GM12878 (cell line): ENCODE measurements at regions of chr6 and their contacts with region 1.

Region 1: DNA sequence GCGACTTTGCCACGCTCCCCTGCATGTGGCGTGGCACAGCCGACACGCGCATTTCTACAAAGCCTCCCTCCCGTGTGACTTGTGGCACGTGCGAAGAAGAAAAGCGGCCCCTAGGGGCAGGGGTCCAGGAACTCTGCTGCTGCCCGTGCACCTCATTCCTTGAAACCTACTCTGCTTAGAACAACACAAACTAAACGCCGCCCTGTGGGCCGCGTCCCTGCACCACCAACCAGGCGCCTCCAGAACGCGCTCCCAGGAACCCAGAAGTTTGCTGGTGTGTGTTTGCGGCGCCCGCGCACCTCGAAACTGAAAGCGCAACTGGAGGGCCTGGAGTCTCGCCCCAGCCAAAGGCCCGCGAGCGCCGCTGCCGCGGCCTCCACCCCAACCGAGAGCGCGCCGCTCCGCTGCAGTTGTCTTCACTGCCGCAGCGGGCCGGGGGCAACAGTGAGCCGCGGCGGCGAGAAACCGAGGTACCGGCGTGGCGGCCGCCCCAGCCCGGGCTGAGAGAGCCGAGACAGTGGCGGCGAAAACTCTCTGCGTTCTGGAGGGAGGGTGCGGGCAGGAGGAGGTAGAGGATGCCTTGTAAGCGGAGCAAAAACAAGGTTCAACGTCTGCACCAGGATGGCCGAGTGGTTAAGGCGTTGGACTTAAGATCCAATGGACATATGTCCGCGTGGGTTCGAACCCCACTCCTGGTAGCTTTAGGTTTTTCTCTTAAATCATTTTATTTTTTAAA is 65.8 kb downstream of the STX11 start:
- DNase-seq: peak; percentile 96
- ATAC-seq: peak; percentile 95
- H3K4me3 ChIP-seq: peak overlapping the region; percentile 68
- H3K27ac ChIP-seq: peak overlapping the region; percentile 88
- H3K4me1 ChIP-seq: peaks cover 9% of the 10 kb centered on the region
- H3K27me3 ChIP-seq: no peaks in the 10 kb centered on the region
- CTCF ChIP-seq: peak; percentile 60 to 79 (median 69)
- EP300 ChIP-seq: peak in 1 of 2 experiments; percentile 91; a peak in 1 of 4 replicates
- POLR2A ChIP-seq: peak; percentile 79
- RAD21 ChIP-seq: peak; percentile 51

Region 2: GRCh38 chr6:143575440-143575839 is 640.7 kb before region 1 on chr6:
- CTCF ChIA-PET with region 1: interaction called, 5 read pairs
- POLR2A ChIA-PET with region 1: no interaction called
- RAD21 ChIA-PET with region 1: interaction called, 8 read pairs
- SMC1A ChIA-PET with region 1: interaction called, 5 read pairs
- in situ Hi-C with region 1: loop called (anchors 5 kb)
- intact Hi-C with region 1: loop called (anchors 5 kb)
- DNase-seq: peak; percentile 27
- ATAC-seq: peak; percentile 94
- H3K4me3 ChIP-seq: no peak overlapping the region
- H3K27ac ChIP-seq: no peak overlapping the region
- H3K4me1 ChIP-seq: no peaks in the 10 kb centered on the region
- H3K27me3 ChIP-seq: no peaks in the 10 kb centered on the region; a peak in 2 of 4 replicates
- CTCF ChIP-seq: peak; percentile 63 to 81 (median 79)
- EP300 ChIP-seq: no peak
- POLR2A ChIP-seq: no peak
- RAD21 ChIP-seq: peak; percentile 89

Region 3: GRCh38 chr6:144095331-144096002 is 120.6 kb before region 1 on chr6 and contains the start of gene SF3B5:
- CTCF ChIA-PET with region 1: interaction called, 24 read pairs
- POLR2A ChIA-PET with region 1: interaction called, 3 read pairs
- RAD21 ChIA-PET with region 1: interaction called, 27 read pairs
- SMC1A ChIA-PET with region 1: interaction called, 47 read pairs
- in situ Hi-C with region 1: loop called (anchors 5 kb)
- intact Hi-C with region 1: no loop called
- DNase-seq: peak; percentile 99
- ATAC-seq: peak; percentile 96
- H3K4me3 ChIP-seq: peak within 1 kb of the TSS; percentile 92
- H3K27ac ChIP-seq: peak within 1 kb of the TSS; percentile 81
- H3K4me1 ChIP-seq: peaks cover 15% of the 10 kb centered on the region
- H3K27me3 ChIP-seq: no peaks in the 10 kb centered on the region
- CTCF ChIP-seq: no peak
- EP300 ChIP-seq: no peak
- POLR2A ChIP-seq: peak; percentile 99
- RAD21 ChIP-seq: no peak
- polyA plus RNA-seq, gene SF3B5: 700 to 864 TPM

Region 4: GRCh38 chr6:144113366-144113765 is 102.7 kb before region 1 on chr6:
- CTCF ChIA-PET with region 1: interaction called, 142 read pairs
- POLR2A ChIA-PET with region 1: no interaction called
- RAD21 ChIA-PET with region 1: interaction called, 87 read pairs
- SMC1A ChIA-PET with region 1: interaction called, 125 read pairs
- in situ Hi-C with region 1: no loop called
- intact Hi-C with region 1: no loop called
- DNase-seq: no peak
- ATAC-seq: no peak
- H3K4me3 ChIP-seq: no peak overlapping the region
- H3K27ac ChIP-seq: no peak overlapping the region
- H3K4me1 ChIP-seq: no peaks in the 10 kb centered on the region
- H3K27me3 ChIP-seq: no peaks in the 10 kb centered on the region; a peak in 1 of 4 replicates
- CTCF ChIP-seq: no peak
- EP300 ChIP-seq: no peak
- POLR2A ChIP-seq: no peak
- RAD21 ChIP-seq: no peak

Region 5: DNA sequence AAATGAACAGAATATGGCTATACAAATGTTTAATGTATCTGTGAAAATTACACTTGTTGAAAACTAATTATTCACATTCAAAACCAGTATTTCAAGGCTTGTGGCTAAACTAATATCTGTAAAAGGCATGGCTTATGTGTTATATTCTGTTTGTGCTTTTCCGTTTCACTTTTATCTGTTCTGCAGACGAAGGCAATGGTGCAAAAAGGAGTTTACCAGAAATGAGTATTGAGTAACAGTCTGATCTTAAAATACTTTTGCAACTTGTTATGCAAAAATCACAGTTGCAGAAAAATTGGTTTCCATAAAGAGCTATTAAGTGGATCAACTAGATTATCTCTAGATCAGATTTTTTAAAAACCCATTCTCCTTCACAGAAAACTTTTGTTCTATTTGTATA is 75.2 kb before region 1 on chr6:
- CTCF ChIA-PET with region 1: interaction called, 6 read pairs
- POLR2A ChIA-PET with region 1: interaction called, 4 read pairs
- RAD21 ChIA-PET with region 1: interaction called, 21 read pairs
- SMC1A ChIA-PET with region 1: interaction called, 7 read pairs
- in situ Hi-C with region 1: no loop called
- intact Hi-C with region 1: no loop called
- DNase-seq: no peak
- ATAC-seq: peak; percentile 84
- H3K4me3 ChIP-seq: peak overlapping the region; percentile 37; the same call in 1 of the 2 replicates
- H3K27ac ChIP-seq: peak overlapping the region; percentile 71
- H3K4me1 ChIP-seq: peaks cover 18% of the 10 kb centered on the region
- H3K27me3 ChIP-seq: no peaks in the 10 kb centered on the region
- CTCF ChIP-seq: no peak
- EP300 ChIP-seq: no peak
- POLR2A ChIP-seq: no peak
- RAD21 ChIP-seq: no peak

Region 6: GRCh38 chr6:144155529-144155928 is 60.6 kb before region 1 on chr6:
- CTCF ChIA-PET with region 1: interaction called, 12 read pairs
- POLR2A ChIA-PET with region 1: interaction called, 3 read pairs
- RAD21 ChIA-PET with region 1: interaction called, 17 read pairs
- SMC1A ChIA-PET with region 1: interaction called, 21 read pairs
- in situ Hi-C with region 1: loop called (anchors 5 kb)
- intact Hi-C with region 1: loop called (anchors 1 kb)
- DNase-seq: no peak
- ATAC-seq: peak; percentile 63
- H3K4me3 ChIP-seq: peak overlapping the region; percentile 26
- H3K27ac ChIP-seq: peak overlapping the region; percentile 57
- H3K4me1 ChIP-seq: peaks cover 36% of the 10 kb centered on the region
- H3K27me3 ChIP-seq: no peaks in the 10 kb centered on the region
- CTCF ChIP-seq: no peak
- EP300 ChIP-seq: no peak
- POLR2A ChIP-seq: no peak
- RAD21 ChIP-seq: no peak

Region 7: GRCh38 chr6:144349690-144350527 is 133.8 kb after region 1 on chr6:
- CTCF ChIA-PET with region 1: interaction called, 5 read pairs
- POLR2A ChIA-PET with region 1: interaction called, 3 read pairs
- RAD21 ChIA-PET with region 1: interaction called, 5 read pairs
- SMC1A ChIA-PET with region 1: no interaction called
- in situ Hi-C with region 1: no loop called
- intact Hi-C with region 1: loop called (anchors 2 kb)
- DNase-seq: peak; percentile 60
- ATAC-seq: peak; percentile 44
- H3K4me3 ChIP-seq: peak overlapping the region; percentile 60
- H3K27ac ChIP-seq: peak overlapping the region; percentile 88
- H3K4me1 ChIP-seq: peaks cover 55% of the 10 kb centered on the region
- H3K27me3 ChIP-seq: no peaks in the 10 kb centered on the region
- CTCF ChIP-seq: no peak
- EP300 ChIP-seq: peak in 1 of 2 experiments; percentile 25; a peak in 1 of 4 replicates
- POLR2A ChIP-seq: no peak; the same call in 1 of the 2 replicates
- RAD21 ChIP-seq: no peak